CD14-positive monocyte (primary cell): ENCODE measurements at regions of chr6 and their contacts with region 1.

Region 1: GRCh38 chr6:110873981-110874879 is at the start of gene AMD1:
- DNase-seq: peak; percentile 97 to 99 (median 98)
- H3K4me3 ChIP-seq: peak within 1 kb of the TSS; percentile 92 to 98 (median 94)
- H3K4me3 Mint-ChIP-seq: peak within 1 kb of the TSS; percentile 96 to 100
- H3K27ac ChIP-seq: peak within 1 kb of the TSS; percentile 93 to 96
- H3K27ac Mint-ChIP-seq: peak within 1 kb of the TSS; percentile 96 to 99 (median 98)
- H3K4me1 ChIP-seq: peaks cover 28 to 35% of the 10 kb centered on the region in 2 donors
- H3K4me1 Mint-ChIP-seq: peaks cover 24% of the 10 kb centered on the region
- H3K27me3 ChIP-seq: no peaks in the 10 kb centered on the region
- H3K27me3 Mint-ChIP-seq: no peaks in the 10 kb centered on the region
- CTCF ChIP-seq: no peak
- polyA plus RNA-seq, gene AMD1: 35.0 to 60.5 (median 45.3) TPM

Region 2: GRCh38 chr6:110746680-110747079 is 127.5 kb before region 1 on chr6:
- intact Hi-C with region 1: loop called in 1 of 2 experiments (anchors 10 kb)
- DNase-seq: no peak
- H3K4me3 ChIP-seq: no peak overlapping the region
- H3K4me3 Mint-ChIP-seq: no peak overlapping the region
- H3K27ac ChIP-seq: no peak overlapping the region
- H3K27ac Mint-ChIP-seq: no peak overlapping the region
- H3K4me1 ChIP-seq: peaks cover 30 to 35% of the 10 kb centered on the region in 2 donors
- H3K4me1 Mint-ChIP-seq: peaks cover 31% of the 10 kb centered on the region
- H3K27me3 ChIP-seq: no peaks in the 10 kb centered on the region
- H3K27me3 Mint-ChIP-seq: no peaks in the 10 kb centered on the region
- CTCF ChIP-seq: no peak

Region 3: DNA sequence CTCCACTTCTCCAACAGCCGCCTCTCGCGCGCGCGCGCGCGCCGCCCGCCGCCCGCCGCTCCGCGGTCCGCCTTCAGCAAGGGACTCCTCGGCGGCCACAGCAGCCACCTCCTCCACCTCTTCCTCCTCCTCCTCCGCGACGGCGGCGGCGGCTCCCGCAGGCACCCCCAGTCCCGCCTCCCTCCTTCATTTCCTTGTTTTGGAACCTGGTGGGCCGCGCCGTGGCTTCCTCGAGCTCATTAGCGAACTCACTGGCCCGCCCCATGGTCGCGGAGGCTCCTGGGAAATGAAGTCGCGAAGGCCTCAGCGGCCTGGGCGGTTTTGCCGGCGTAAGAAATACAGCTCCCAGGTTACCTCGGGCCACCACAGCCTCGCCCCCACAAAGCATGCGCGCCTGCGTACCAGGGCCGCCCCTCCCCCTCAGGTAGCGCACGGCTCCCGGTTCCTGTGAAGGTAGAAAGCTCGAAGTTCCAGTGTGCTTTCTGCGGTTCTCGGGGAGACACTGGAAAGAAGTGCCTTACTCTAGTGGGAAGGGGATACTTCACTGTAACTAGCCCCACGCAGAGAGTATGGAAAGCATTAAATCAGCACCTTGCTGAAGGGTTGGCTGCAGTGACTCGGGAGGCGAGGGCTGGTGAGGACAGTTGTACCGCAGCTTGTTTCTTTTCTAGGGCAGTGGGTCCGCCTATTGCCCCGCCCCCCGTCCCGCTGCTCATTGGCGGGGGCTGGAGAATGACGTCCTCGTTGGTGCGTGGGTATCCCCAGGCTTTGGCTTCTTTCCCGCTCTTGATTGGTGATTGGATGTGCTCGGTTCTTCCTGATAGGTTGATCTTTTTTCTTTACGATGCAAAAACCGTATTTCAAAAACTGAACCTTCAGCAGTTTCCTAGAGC is 58.8 kb before region 1 on chr6 and contains the start of gene CDK19:
- intact Hi-C with region 1: loop called (anchors 2 kb)
- DNase-seq: peak; percentile 98
- H3K4me3 ChIP-seq: peak within 1 kb of the TSS; percentile 79 to 94 (median 88)
- H3K4me3 Mint-ChIP-seq: peak within 1 kb of the TSS; percentile 98 to 100
- H3K27ac ChIP-seq: peak within 1 kb of the TSS; percentile 93 to 97
- H3K27ac Mint-ChIP-seq: peak within 1 kb of the TSS; percentile 98 to 100 (median 99)
- H3K4me1 ChIP-seq: peaks cover 25 to 38% of the 10 kb centered on the region in 2 donors
- H3K4me1 Mint-ChIP-seq: peaks cover 43% of the 10 kb centered on the region
- H3K27me3 ChIP-seq: no peaks in the 10 kb centered on the region
- H3K27me3 Mint-ChIP-seq: peaks cover 0 to 2% (median 0%) of the 10 kb centered on the region in 3 donors
- CTCF ChIP-seq: no peak
- polyA plus RNA-seq, gene CDK19: 2.7 to 12.0 (median 3.9) TPM

Region 4: DNA sequence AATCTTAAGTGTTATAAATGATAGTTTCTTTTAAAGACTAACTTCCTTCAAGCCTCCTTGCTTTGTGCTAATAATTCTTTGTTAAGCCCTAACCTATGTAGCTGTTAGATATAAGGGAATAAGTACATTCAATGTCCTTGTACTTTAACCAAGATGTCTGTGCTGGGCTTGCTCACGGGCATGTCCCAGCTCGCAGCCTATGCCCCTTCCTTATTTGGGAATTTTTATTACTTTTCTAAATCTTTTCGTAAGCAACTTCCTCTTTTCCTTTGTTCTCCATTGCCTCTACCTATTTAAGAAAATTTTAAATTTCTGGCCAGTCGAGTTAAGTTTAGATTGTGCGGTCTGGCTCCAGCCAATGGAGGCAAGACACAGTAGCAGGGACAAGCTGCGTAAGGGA is 33.0 kb before region 1 on chr6:
- intact Hi-C with region 1: no loop called
- DNase-seq: peak in 2 of 3 donors; percentile 23 to 49
- H3K4me3 ChIP-seq: peak overlapping the region in 1 of 3 experiments; percentile 39
- H3K4me3 Mint-ChIP-seq: peak overlapping the region; percentile 54 to 83
- H3K27ac ChIP-seq: no peak overlapping the region
- H3K27ac Mint-ChIP-seq: peak overlapping the region in 2 of 7 donors; percentile 34 to 78
- H3K4me1 ChIP-seq: peaks cover 7 to 8% of the 10 kb centered on the region in 2 donors
- H3K4me1 Mint-ChIP-seq: peaks cover 10% of the 10 kb centered on the region
- H3K27me3 ChIP-seq: no peaks in the 10 kb centered on the region
- H3K27me3 Mint-ChIP-seq: peaks cover 0 to 2% (median 2%) of the 10 kb centered on the region in 3 donors
- CTCF ChIP-seq: no peak

Region 5: DNA sequence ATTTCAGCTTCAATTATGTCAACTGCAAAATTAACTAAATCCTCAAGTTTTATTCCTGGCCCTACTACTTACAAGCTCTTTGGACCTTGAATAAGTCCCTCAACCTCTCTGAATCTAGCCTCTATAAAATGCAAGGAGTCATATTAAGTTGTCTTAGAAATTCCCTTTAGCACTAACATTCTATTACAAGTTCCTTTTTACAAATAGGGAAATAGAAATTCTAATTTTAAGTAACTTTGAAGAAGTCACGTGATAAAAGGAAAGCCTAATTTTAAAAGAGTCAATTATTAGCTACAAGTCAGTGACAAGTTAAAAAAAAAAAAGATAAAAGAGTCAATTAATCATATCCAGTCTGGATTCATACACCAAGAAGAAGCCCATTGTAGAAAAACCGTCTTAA is 59.7 kb after region 1 on chr6:
- intact Hi-C with region 1: loop called in 1 of 2 experiments (anchors 5 kb)
- DNase-seq: peak; percentile 29 to 67 (median 51)
- H3K4me3 ChIP-seq: no peak overlapping the region
- H3K4me3 Mint-ChIP-seq: peak overlapping the region in 1 of 2 donors; percentile 44
- H3K27ac ChIP-seq: peak overlapping the region; percentile 57 to 84
- H3K27ac Mint-ChIP-seq: peak overlapping the region; percentile 77 to 96 (median 90)
- H3K4me1 ChIP-seq: peaks cover 33 to 39% of the 10 kb centered on the region in 2 donors
- H3K4me1 Mint-ChIP-seq: peaks cover 31% of the 10 kb centered on the region
- H3K27me3 ChIP-seq: no peaks in the 10 kb centered on the region
- H3K27me3 Mint-ChIP-seq: peaks cover 0 to 3% (median 0%) of the 10 kb centered on the region in 3 donors
- CTCF ChIP-seq: no peak

Region 6: DNA sequence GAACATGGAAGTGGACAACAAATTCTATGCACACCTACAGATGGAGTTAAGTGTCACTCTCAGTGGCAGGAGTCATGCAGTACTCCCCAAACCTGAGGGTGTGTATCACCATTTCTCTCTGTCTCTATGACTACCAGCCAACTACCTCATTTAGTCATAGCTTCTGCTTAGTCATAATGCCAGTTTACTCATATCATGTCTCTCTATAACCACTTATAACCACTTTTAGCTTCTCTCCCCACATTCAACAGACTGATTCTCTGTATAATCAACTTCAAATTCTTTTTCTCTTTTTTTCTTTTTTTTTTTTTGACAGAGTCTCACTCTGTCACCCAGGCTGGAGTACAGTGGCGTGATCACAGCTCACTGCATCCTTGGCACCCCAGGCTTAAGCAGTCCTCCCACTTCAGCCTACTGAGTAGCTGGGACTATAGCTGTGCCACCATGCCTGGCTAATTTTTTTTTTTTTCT is 70.5 kb after region 1 on chr6:
- intact Hi-C with region 1: loop called (anchors 5 kb)
- DNase-seq: peak; percentile 91 to 99 (median 98)
- H3K4me3 ChIP-seq: no peak overlapping the region
- H3K4me3 Mint-ChIP-seq: peak overlapping the region in 1 of 2 donors; percentile 15
- H3K27ac ChIP-seq: peak overlapping the region; percentile 85 to 86
- H3K27ac Mint-ChIP-seq: peak overlapping the region; percentile 86 to 98 (median 94)
- H3K4me1 ChIP-seq: peaks cover 13 to 17% of the 10 kb centered on the region in 2 donors
- H3K4me1 Mint-ChIP-seq: peaks cover 13% of the 10 kb centered on the region
- H3K27me3 ChIP-seq: no peaks in the 10 kb centered on the region
- H3K27me3 Mint-ChIP-seq: peaks cover 0 to 2% (median 0%) of the 10 kb centered on the region in 3 donors
- CTCF ChIP-seq: no peak